Naive thymus-derived CD4-positive, alpha-beta T cell (primary cell): ENCODE measurements at regions of chr18 and their contacts with region 1.

Region 1: DNA sequence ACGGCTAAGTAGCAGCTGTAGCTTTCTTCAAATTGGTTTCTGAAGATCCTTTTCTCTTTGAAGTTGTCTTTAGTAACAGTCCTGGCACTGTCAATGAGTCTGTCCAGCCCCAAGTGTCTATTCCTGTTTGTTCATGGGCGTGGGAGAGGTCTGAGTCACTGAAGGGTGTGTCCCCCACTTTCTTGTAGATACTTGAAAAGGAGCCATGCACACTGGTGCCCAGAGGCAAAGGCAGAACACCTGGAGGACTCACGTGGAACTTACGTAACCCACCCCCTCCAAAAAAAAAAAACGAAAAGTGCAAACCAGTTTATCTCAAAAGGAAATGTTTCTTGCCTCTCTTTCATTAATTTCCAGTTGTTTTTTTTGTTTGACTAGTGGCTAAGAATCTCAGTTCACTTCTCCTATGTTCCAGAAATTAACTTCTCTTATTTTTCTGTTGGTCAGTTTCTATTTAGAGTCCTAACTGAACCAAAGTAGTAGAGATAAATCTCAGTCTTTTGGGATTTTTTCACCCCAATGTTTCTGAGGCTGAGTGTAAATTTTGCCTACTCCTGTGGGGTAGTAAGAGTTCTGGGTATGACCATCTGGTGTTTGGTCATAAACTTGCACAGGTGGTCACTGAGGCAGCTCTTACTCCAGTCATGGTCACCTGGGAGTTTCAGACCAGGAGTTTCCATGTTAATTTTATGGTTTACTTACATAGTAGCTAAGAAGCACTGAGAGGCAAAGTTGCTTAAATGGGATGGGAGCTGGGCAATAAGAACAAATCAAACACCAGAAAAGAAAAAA is 54.9 kb downstream of the DSC3 start:
- DNase-seq: no peak
- ATAC-seq: no peak
- H3K4me3 ChIP-seq: no peak overlapping the region
- H3K4me3 Mint-ChIP-seq: no peak overlapping the region
- H3K27ac ChIP-seq: no peak overlapping the region
- H3K27ac Mint-ChIP-seq: no peak overlapping the region
- H3K4me1 ChIP-seq: no peaks in the 10 kb centered on the region
- H3K4me1 Mint-ChIP-seq: no peaks in the 10 kb centered on the region
- H3K27me3 ChIP-seq: no peaks in the 10 kb centered on the region
- H3K27me3 Mint-ChIP-seq: no peaks in the 10 kb centered on the region

Region 2: DNA sequence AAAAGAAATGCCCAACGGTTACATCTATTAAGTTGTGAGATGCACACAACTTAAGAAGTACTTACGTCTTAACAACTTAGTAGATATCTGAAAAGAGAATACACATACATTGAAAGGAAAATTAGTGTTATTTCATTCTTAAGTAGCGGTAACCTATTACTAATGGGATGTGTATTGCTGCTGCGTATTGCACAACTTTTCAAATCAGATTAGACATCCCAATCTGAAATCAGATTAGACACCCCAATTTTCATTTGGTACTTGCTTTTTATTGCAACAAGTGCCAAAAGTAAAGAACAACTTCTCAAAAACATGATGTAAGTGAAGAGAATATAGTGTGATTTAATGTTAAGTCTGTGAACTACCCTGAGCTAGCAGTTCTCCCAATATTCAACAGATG is 100.6 kb before region 1 on chr18:
- CTCF ChIA-PET with region 1: no interaction called
- POLR2A ChIA-PET with region 1: no interaction called
- intact Hi-C with region 1: no loop called
- DNase-seq: no peak
- ATAC-seq: no peak
- H3K4me3 ChIP-seq: no peak overlapping the region
- H3K4me3 Mint-ChIP-seq: no peak overlapping the region
- H3K27ac ChIP-seq: no peak overlapping the region
- H3K27ac Mint-ChIP-seq: no peak overlapping the region
- H3K4me1 ChIP-seq: no peaks in the 10 kb centered on the region
- H3K4me1 Mint-ChIP-seq: no peaks in the 10 kb centered on the region
- H3K27me3 ChIP-seq: no peaks in the 10 kb centered on the region
- H3K27me3 Mint-ChIP-seq: no peaks in the 10 kb centered on the region

Region 3: GRCh38 chr18:31241900-31242409 is 254.3 kb after region 1 on chr18:
- CTCF ChIA-PET with region 1: no interaction called
- POLR2A ChIA-PET with region 1: no interaction called
- intact Hi-C with region 1: no loop called
- DNase-seq: no peak
- ATAC-seq: no peak
- H3K4me3 ChIP-seq: no peak overlapping the region
- H3K4me3 Mint-ChIP-seq: no peak overlapping the region
- H3K27ac ChIP-seq: no peak overlapping the region
- H3K27ac Mint-ChIP-seq: no peak overlapping the region
- H3K4me1 ChIP-seq: no peaks in the 10 kb centered on the region
- H3K4me1 Mint-ChIP-seq: no peaks in the 10 kb centered on the region
- H3K27me3 ChIP-seq: no peaks in the 10 kb centered on the region
- H3K27me3 Mint-ChIP-seq: no peaks in the 10 kb centered on the region

Region 4: GRCh38 chr18:32373995-32374394 is 1386.3 kb after region 1 on chr18:
- CTCF ChIA-PET with region 1: no interaction called
- POLR2A ChIA-PET with region 1: no interaction called
- intact Hi-C with region 1: loop called in 1 of 2 experiments (anchors 5 kb)
- DNase-seq: no peak
- ATAC-seq: no peak
- H3K4me3 ChIP-seq: no peak overlapping the region
- H3K4me3 Mint-ChIP-seq: no peak overlapping the region
- H3K27ac ChIP-seq: no peak overlapping the region
- H3K27ac Mint-ChIP-seq: no peak overlapping the region
- H3K4me1 ChIP-seq: no peaks in the 10 kb centered on the region
- H3K4me1 Mint-ChIP-seq: no peaks in the 10 kb centered on the region
- H3K27me3 ChIP-seq: no peaks in the 10 kb centered on the region
- H3K27me3 Mint-ChIP-seq: peaks cover 0 to 12% (median 9%) of the 10 kb centered on the region in 5 donors